ENCODE measurements at regions of chr4 and their contacts with region 1.

Region 1: DNA sequence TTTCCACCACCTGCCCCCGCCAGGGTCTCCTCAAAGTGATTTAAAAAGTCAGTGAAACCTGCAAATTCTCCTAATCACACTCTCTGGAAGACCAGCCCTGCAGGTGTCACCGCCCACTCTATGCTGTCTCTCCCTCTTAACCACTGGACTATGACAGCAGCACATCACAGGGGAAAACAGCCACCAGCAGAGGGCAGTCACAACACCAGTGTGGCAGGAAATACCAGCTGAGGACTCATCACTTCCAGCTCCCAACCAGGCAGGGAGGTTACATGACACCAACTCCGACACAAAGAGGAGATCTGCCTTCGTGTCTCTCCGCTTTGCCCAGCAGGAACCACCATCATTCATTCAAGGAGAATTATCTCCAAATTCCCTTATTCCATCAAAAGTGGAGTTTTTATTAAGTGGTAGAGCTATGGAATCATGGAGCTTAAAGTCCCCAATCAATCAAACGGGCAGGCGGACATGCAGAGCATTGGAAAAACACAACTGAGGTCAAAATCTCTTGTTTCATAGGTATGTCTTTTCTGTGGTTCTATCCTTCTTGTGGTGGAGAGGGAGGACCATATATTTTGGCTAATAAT is 91.3 kb downstream of the NSUN7 start:
- DNase-seq: peak; percentile 67 to 80 (median 77)
- H3K4me3 ChIP-seq: no peak overlapping the region
- H3K27ac ChIP-seq: no peak overlapping the region
- H3K4me1 ChIP-seq: peaks cover 0 to 2% (median 0%) of the 10 kb centered on the region in 4 experiments
- H3K27me3 ChIP-seq: no peaks in the 10 kb centered on the region

Region 2: GRCh38 chr4:40736910-40737309 is 104.2 kb before region 1 on chr4:
- CTCF ChIA-PET with region 1: interaction called, 57 read pairs
- POLR2A ChIA-PET with region 1: no interaction called
- DNase-seq: peak; percentile 49 to 74 (median 69)
- H3K4me3 ChIP-seq: no peak overlapping the region
- H3K27ac ChIP-seq: no peak overlapping the region
- H3K4me1 ChIP-seq: peaks cover 5 to 11% (median 10%) of the 10 kb centered on the region in 4 experiments
- H3K27me3 ChIP-seq: no peaks in the 10 kb centered on the region

Region 3: DNA sequence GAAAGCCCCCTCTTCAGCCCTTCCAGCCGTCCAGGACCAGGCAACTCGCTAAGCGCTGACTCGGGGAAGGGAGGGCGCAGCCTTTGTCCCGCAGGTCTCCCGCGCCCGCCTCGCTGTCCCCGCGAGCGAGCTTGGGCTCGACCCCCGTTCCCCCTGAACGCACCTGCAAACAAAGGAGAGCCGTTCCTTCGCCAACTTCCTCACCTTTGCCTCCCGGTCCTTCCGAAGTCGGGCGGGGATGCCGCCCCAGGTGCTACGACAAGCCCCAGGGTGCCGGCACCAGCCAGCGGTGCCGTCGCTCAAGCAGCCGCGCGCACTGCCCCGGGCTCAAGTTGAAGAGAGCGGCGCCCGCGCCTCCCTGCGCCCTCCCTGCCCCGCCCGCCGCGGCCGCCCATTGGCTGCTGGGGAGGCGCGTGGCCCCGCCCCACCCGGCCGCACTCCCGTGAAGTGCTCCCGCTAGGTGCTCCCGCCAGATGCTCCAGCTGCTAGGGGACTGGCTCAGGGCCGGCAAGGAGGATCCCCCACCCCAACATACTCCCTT is 15.8 kb after region 1 on chr4:
- CTCF ChIA-PET with region 1: interaction called, 30 read pairs
- POLR2A ChIA-PET with region 1: no interaction called
- DNase-seq: peak; percentile 55 to 68 (median 56)
- H3K4me3 ChIP-seq: peak overlapping the region; percentile 13 to 81 (median 66)
- H3K27ac ChIP-seq: no peak overlapping the region
- H3K4me1 ChIP-seq: peaks cover 3 to 14% (median 10%) of the 10 kb centered on the region in 4 experiments
- H3K27me3 ChIP-seq: peaks cover 2 to 14% (median 5%) of the 10 kb centered on the region in 5 experiments

Measured in common myeloid progenitor, CD34-positive (primary cell).